CD14-positive monocyte (primary cell): ENCODE measurements at regions of chrX and their contacts with region 1.

Region 1: GRCh38 chrX:40169193-40170101 is 71.7 kb upstream of the BCOR start:
- DNase-seq: peak; percentile 78 to 87 (median 79)
- H3K4me3 ChIP-seq: peak overlapping the region in 2 of 3 experiments; percentile 21 to 75
- H3K4me3 Mint-ChIP-seq: peak overlapping the region; percentile 67 to 80
- H3K27ac ChIP-seq: peak overlapping the region; percentile 68 to 92
- H3K27ac Mint-ChIP-seq: peak overlapping the region in 6 of 7 donors; percentile 59 to 88 (median 81)
- H3K4me1 ChIP-seq: peaks cover 66 to 72% of the 10 kb centered on the region in 2 donors
- H3K4me1 Mint-ChIP-seq: peaks cover 53% of the 10 kb centered on the region
- H3K27me3 ChIP-seq: peaks cover 8 to 9% of the 10 kb centered on the region in 2 donors
- H3K27me3 Mint-ChIP-seq: peaks cover 17 to 78% (median 33%) of the 10 kb centered on the region in 3 donors
- CTCF ChIP-seq: peak; percentile 49

Region 2: GRCh38 chrX:39755143-39756032 is 414.1 kb before region 1 on chrX:
- intact Hi-C with region 1: loop called in 1 of 2 experiments (anchors 10 kb)
- DNase-seq: peak; percentile 37 to 55 (median 41)
- H3K4me3 ChIP-seq: no peak overlapping the region
- H3K4me3 Mint-ChIP-seq: no peak overlapping the region
- H3K27ac ChIP-seq: no peak overlapping the region
- H3K27ac Mint-ChIP-seq: no peak overlapping the region
- H3K4me1 ChIP-seq: peaks cover 45 to 49% of the 10 kb centered on the region in 2 donors
- H3K4me1 Mint-ChIP-seq: peaks cover 42% of the 10 kb centered on the region
- H3K27me3 ChIP-seq: no peaks in the 10 kb centered on the region
- H3K27me3 Mint-ChIP-seq: peaks cover 0 to 3% (median 0%) of the 10 kb centered on the region in 3 donors
- CTCF ChIP-seq: no peak

Region 3: DNA sequence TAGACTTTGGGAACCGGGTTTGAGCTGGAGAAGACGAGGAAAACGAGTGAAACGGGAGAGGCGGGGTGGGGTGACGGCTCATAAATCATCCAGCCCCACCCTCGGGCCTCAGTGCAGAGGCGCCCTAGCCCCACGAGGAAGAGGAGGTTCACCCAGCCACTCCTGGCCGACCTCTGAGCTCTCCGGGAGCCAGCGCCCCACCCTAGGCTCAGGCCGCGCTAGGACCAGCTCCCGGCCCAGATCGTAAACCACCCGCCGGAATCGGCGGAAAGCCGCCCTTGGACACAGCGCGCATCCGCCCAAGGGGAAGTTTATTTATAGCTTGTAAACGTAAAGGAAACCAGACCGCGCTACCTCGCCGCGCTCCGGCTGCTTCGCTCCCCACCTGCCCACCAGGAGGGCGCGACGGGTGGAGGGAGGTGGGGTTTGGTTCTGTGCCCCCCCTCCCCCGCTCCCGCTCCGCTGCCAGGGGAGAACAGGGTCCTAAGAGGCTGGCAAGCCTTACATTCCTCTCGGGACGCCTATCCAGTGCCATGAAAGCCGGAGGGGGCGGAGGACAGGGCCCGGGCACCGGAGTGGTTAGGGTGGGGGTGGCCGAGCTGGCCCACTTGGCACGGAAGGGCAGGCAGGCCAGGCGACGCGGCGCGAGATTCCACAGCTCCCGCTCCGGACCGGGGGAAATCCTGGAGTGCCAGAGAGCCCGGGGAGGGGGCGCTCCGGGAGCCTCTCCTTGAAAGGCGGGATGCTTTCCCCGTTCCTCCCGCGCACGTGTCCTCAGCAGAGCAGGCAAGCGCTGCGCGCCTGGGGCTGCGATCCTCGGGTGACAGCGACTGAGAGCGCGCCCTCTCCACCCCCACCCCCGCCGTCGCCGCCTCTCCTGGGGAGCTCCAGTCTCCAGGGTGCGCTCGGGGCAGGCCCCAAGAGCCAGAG is 155.9 kb before region 1 on chrX:
- intact Hi-C with region 1: loop called in 1 of 2 experiments (anchors 10 kb)
- DNase-seq: peak; percentile 30 to 39 (median 32)
- H3K4me3 ChIP-seq: peak overlapping the region; percentile 59 to 78 (median 64)
- H3K4me3 Mint-ChIP-seq: peak overlapping the region; percentile 83 to 90
- H3K27ac ChIP-seq: peak overlapping the region in 1 of 2 donors; percentile 48
- H3K27ac Mint-ChIP-seq: peak overlapping the region in 2 of 7 donors; percentile 57 to 61
- H3K4me1 ChIP-seq: peaks cover 49 to 54% of the 10 kb centered on the region in 2 donors
- H3K4me1 Mint-ChIP-seq: peaks cover 39% of the 10 kb centered on the region
- H3K27me3 ChIP-seq: peaks cover 18 to 42% of the 10 kb centered on the region in 2 donors
- H3K27me3 Mint-ChIP-seq: peaks cover 38 to 68% (median 46%) of the 10 kb centered on the region in 3 donors
- CTCF ChIP-seq: no peak

Region 4: GRCh38 chrX:40108959-40109287 is 60.5 kb before region 1 on chrX:
- intact Hi-C with region 1: loop called in 1 of 2 experiments (anchors 5 kb)
- DNase-seq: peak in 2 of 3 donors; percentile 59 to 67
- H3K4me3 ChIP-seq: peak overlapping the region; percentile 21 to 67 (median 32)
- H3K4me3 Mint-ChIP-seq: peak overlapping the region; percentile 50 to 57
- H3K27ac ChIP-seq: no peak overlapping the region
- H3K27ac Mint-ChIP-seq: peak overlapping the region in 1 of 7 donors; percentile 35
- H3K4me1 ChIP-seq: peaks cover 35 to 48% of the 10 kb centered on the region in 2 donors
- H3K4me1 Mint-ChIP-seq: peaks cover 16% of the 10 kb centered on the region
- H3K27me3 ChIP-seq: peaks cover 0 to 11% of the 10 kb centered on the region in 2 donors
- H3K27me3 Mint-ChIP-seq: peaks cover 6 to 54% (median 15%) of the 10 kb centered on the region in 3 donors
- CTCF ChIP-seq: no peak

Region 5: DNA sequence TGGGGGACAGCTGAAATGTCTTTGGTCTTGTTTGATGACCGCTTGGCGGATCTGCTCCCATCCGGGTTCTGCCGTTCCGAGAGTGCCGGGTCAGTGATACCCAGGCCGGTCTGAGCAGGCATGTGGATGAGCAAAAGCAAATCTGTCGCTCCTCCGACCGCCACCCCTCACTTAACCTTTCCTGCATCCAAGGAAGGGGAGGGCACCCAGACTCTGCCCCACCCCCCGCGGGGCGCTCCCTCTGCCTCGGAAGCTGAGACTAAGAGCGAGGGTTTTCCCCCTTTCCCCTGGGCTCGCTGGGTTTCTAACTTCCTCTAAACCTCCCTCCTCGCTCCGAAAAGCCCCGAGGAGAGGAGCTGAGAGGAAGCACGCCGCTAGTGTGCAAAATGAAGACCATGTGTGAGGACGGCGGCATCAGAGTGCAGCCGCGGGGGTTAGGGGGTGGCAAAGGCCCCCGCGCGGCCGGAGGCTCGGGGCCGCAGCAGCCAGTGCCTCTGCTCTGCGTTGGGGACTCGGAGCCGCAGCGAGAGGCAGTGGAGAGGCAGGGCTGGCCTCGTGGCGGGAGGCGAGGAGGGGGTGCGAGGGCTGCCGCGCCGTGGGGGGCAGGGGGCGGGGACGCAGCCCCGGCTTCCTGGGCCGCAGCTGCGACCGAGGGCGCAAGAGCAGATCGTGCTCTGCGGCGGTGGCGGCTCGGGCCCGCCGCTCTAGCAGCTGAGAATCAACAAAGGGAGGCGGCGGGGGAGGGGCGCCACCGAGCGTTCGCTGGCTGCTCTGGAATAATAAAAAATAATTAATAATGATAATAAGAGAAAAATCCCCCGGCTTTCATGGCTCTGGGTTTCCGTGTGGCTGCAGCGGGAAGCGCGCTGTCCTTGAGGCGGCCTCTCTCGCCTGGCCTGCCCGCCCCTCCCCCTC is 15.9 kb before region 1 on chrX:
- intact Hi-C with region 1: loop called in 1 of 2 experiments (anchors 2 kb)
- DNase-seq: peak; percentile 69 to 81 (median 72)
- H3K4me3 ChIP-seq: peak overlapping the region; percentile 15 to 77 (median 49)
- H3K4me3 Mint-ChIP-seq: peak overlapping the region; percentile 78 to 83
- H3K27ac ChIP-seq: peak overlapping the region; percentile 17 to 50
- H3K27ac Mint-ChIP-seq: peak overlapping the region in 6 of 7 donors; percentile 42 to 82 (median 70)
- H3K4me1 ChIP-seq: peaks cover 70 to 95% of the 10 kb centered on the region in 2 donors
- H3K4me1 Mint-ChIP-seq: peaks cover 48% of the 10 kb centered on the region
- H3K27me3 ChIP-seq: peaks cover 0 to 10% of the 10 kb centered on the region in 2 donors
- H3K27me3 Mint-ChIP-seq: peaks cover 0 to 75% (median 6%) of the 10 kb centered on the region in 3 donors
- CTCF ChIP-seq: no peak

Region 6: GRCh38 chrX:40209951-40210617 is 40.6 kb after region 1 on chrX:
- intact Hi-C with region 1: no loop called
- DNase-seq: peak in 1 of 3 donors; percentile 35
- H3K4me3 ChIP-seq: no peak overlapping the region
- H3K4me3 Mint-ChIP-seq: no peak overlapping the region
- H3K27ac ChIP-seq: no peak overlapping the region
- H3K27ac Mint-ChIP-seq: peak overlapping the region in 1 of 7 donors; percentile 35
- H3K4me1 ChIP-seq: peaks cover 19 to 24% of the 10 kb centered on the region in 2 donors
- H3K4me1 Mint-ChIP-seq: peaks cover 16% of the 10 kb centered on the region
- H3K27me3 ChIP-seq: no peaks in the 10 kb centered on the region
- H3K27me3 Mint-ChIP-seq: peaks cover 0 to 3% (median 2%) of the 10 kb centered on the region in 3 donors
- CTCF ChIP-seq: no peak

Region 7: DNA sequence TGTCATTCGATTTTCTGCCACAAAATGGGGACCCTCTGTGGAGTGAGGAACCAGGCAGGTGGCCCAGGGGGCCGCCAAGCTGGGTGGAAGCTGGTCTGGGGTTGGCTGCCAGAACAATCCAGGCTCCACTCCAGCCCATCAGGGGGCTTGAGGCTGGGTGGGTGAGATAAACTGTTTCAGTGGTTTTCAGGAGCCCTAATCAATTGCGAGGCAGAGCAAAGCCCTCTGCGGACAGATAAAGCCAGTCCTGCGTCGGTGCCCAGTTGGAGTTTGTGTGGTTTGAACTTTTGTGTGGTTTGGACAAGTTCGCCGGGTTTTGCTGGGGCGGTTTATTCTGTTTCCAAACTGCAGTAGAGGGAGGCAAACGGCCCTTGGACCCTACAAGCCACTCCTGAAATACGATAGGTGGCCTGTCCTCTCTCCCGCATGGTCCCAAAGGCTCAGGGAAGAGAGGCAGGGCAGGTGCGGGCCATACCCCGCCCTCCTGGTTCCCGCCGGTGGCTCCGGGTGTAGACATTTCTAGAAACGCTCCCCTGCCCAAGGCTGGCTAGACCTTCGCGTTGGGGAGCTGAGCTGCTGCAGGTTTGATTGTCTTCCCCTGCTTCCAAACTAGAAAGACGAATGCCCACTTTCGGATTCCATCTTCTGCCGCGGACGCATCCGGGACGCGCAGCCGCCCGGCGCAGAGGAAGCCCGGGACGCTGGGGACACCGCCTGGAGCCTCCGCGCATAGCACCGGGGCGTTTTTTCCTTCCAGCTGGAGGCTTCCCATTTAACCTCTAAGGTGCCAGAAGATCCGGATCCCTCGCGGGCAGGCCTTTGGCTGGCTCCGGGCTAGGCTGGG is 97.3 kb after region 1 on chrX:
- intact Hi-C with region 1: loop called in 1 of 2 experiments (anchors 10 kb)
- DNase-seq: peak; percentile 39 to 46 (median 41)
- H3K4me3 ChIP-seq: peak overlapping the region; percentile 31 to 76 (median 62)
- H3K4me3 Mint-ChIP-seq: peak overlapping the region; percentile 80 to 86
- H3K27ac ChIP-seq: peak overlapping the region; percentile 63 to 72
- H3K27ac Mint-ChIP-seq: peak overlapping the region in 6 of 7 donors; percentile 42 to 84 (median 80)
- H3K4me1 ChIP-seq: peaks cover 30 to 31% of the 10 kb centered on the region in 2 donors
- H3K4me1 Mint-ChIP-seq: peaks cover 18% of the 10 kb centered on the region
- H3K27me3 ChIP-seq: no peaks in the 10 kb centered on the region
- H3K27me3 Mint-ChIP-seq: peaks cover 3 to 19% (median 6%) of the 10 kb centered on the region in 3 donors
- CTCF ChIP-seq: peak; percentile 64

Region 8: DNA sequence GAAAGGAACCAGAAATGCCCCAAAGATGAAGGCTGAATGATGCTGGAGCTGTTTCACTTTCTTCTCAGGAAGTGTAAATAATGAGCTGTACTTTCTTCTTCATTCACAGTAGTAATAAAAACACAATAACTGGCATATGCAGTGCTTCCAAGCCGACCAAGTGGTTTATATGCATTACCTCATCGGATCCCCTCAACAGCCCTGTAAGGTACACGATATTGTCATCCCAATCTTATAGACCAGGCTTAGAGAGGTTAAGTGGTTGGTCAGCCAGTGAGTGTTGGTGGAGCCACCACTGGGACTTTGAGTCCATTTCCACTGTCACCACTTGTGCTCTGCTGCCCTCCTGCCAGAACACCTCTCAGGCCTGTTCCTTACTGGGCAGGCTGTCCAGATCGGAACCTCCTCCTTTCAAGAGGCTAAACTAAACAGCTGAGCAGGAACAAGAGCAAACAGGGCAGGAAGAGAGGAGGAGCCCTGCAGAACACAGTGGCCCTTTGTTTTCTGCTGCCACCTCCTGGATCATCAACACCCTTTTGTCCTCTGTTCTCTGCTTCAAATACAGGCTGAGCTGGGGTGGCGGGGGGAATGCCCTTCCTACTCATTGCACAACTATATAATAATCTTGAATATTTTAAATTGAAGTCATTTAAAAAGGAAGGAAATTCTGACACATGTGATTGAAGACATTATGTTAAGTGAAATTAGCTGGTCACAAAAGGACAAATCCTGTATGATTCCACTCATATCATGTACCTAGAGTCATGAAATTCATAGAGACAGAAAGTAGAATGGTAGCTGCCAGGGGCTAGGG is 298.8 kb after region 1 on chrX:
- intact Hi-C with region 1: loop called in 1 of 2 experiments (anchors 10 kb)
- DNase-seq: peak; percentile 62 to 77 (median 66)
- H3K4me3 ChIP-seq: peak overlapping the region in 1 of 3 experiments; percentile 20
- H3K4me3 Mint-ChIP-seq: peak overlapping the region; percentile 66 to 84
- H3K27ac ChIP-seq: peak overlapping the region; percentile 64 to 77
- H3K27ac Mint-ChIP-seq: peak overlapping the region; percentile 86 to 95 (median 90)
- H3K4me1 ChIP-seq: peaks cover 49 to 52% of the 10 kb centered on the region in 2 donors
- H3K4me1 Mint-ChIP-seq: peaks cover 48% of the 10 kb centered on the region
- H3K27me3 ChIP-seq: peaks cover 0 to 5% of the 10 kb centered on the region in 2 donors
- H3K27me3 Mint-ChIP-seq: peaks cover 4 to 27% (median 12%) of the 10 kb centered on the region in 3 donors
- CTCF ChIP-seq: peak; percentile 28